ENCODE measurements at regions of chr19 and their contacts with region 1.

Region 1: DNA sequence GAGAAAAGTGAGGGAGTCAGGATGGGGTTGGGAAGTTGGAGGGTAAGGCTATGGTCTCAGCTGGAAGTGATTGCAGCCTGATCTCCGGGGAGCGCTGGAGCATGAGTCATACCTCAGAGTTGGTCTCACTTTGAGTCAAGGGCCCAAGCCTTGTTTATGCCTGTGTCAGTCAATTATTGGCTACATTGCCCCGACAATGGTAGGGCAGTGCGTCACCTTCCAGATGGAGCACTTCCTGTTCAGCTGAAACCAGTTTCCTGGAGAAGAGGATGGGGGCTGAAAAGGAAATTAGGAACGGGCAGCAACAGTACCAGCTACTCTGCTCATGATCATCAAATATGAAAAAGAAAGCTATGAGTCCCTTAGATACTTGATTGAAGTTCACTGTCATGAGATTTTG is 60.4 kb downstream of the ADGRE1 start:
- DNase-seq: peak; percentile 80
- ATAC-seq: peak; percentile 98
- H3K4me3 Mint-ChIP-seq: peak overlapping the region; percentile 18
- H3K27ac Mint-ChIP-seq: peak overlapping the region; percentile 55
- H3K4me1 Mint-ChIP-seq: peaks cover 18% of the 10 kb centered on the region
- H3K27me3 Mint-ChIP-seq: no peaks in the 10 kb centered on the region

Region 2: GRCh38 chr19:6891761-6892385 is 55.9 kb before region 1 on chr19:
- CTCF ChIA-PET with region 1: no interaction called
- POLR2A ChIA-PET with region 1: no interaction called
- intact Hi-C with region 1: loop called in 1 of 2 experiments (anchors 5 kb)
- DNase-seq: no peak
- ATAC-seq: no peak
- H3K4me3 Mint-ChIP-seq: peak overlapping the region; percentile 18
- H3K27ac Mint-ChIP-seq: peak overlapping the region; percentile 89
- H3K4me1 Mint-ChIP-seq: peaks cover 79% of the 10 kb centered on the region
- H3K27me3 Mint-ChIP-seq: no peaks in the 10 kb centered on the region

Region 3: DNA sequence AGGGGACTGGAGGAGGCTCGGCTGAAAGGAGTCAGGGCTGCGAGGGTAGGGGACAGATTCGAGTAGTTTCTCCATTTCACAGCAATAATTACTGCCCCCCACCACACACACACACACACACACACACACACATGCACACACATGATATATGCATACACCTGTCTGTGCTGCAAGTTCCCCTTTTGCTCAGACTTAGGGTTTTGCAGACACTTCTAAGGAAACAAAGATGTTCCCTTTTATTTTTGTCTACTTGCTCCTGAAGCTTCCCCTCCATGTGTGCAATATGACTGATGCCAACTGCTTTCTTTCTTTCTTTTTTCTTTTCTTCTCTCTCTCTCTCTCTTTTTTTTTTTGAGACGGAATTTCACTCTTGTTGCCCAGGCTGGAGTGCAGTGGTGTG is 60.1 kb after region 1 on chr19:
- CTCF ChIA-PET with region 1: interaction called, 4 read pairs
- POLR2A ChIA-PET with region 1: no interaction called
- intact Hi-C with region 1: loop called in 1 of 2 experiments (anchors 2 kb)
- DNase-seq: no peak
- ATAC-seq: no peak
- H3K4me3 Mint-ChIP-seq: no peak overlapping the region
- H3K27ac Mint-ChIP-seq: no peak overlapping the region
- H3K4me1 Mint-ChIP-seq: peaks cover 52% of the 10 kb centered on the region
- H3K27me3 Mint-ChIP-seq: no peaks in the 10 kb centered on the region

Region 4: GRCh38 chr19:7953060-7953459 is 1005.3 kb after region 1 on chr19:
- CTCF ChIA-PET with region 1: no interaction called
- POLR2A ChIA-PET with region 1: no interaction called
- intact Hi-C with region 1: no loop called
- DNase-seq: no peak
- ATAC-seq: no peak
- H3K4me3 Mint-ChIP-seq: no peak overlapping the region
- H3K27ac Mint-ChIP-seq: no peak overlapping the region
- H3K4me1 Mint-ChIP-seq: no peaks in the 10 kb centered on the region
- H3K27me3 Mint-ChIP-seq: no peaks in the 10 kb centered on the region